HCT116 (cell line): ENCODE measurements at regions of chr12 and their contacts with region 1.

Region 1: GRCh38 chr12:131327521-131328488 is 374.1 kb downstream of the ADGRD1 start:
- DNase-seq: no peak
- ATAC-seq: peak; percentile 73
- H3K4me3 ChIP-seq: no peak overlapping the region
- H3K27ac ChIP-seq: no peak overlapping the region
- H3K4me1 ChIP-seq: no peaks in the 10 kb centered on the region
- H3K27me3 ChIP-seq: no peaks in the 10 kb centered on the region
- CTCF ChIP-seq: peak in 2 of 3 experiments; percentile 6 to 22; a peak in 1 of 6 replicates
- POLR2A ChIP-seq: no peak
- RAD21 ChIP-seq: peak; percentile 12; the same call in 1 of the 2 replicates

Region 2: GRCh38 chr12:131171029-131171428 is 156.8 kb before region 1 on chr12:
- CTCF ChIA-PET with region 1: no interaction called
- POLR2A ChIA-PET with region 1: no interaction called
- RAD21 ChIA-PET with region 1: no interaction called
- intact Hi-C with region 1: loop called (anchors 10 kb)
- DNase-seq: no peak
- ATAC-seq: no peak
- H3K4me3 ChIP-seq: no peak overlapping the region
- H3K27ac ChIP-seq: no peak overlapping the region
- H3K4me1 ChIP-seq: peaks cover 0 to 7% of the 10 kb centered on the region in 2 experiments; a peak in 1 of 4 replicates
- H3K27me3 ChIP-seq: peaks cover 7% of the 10 kb centered on the region
- CTCF ChIP-seq: no peak
- POLR2A ChIP-seq: no peak
- RAD21 ChIP-seq: no peak